Mammary epithelial cell (primary cell): ENCODE measurements at regions of chr14 and their contacts with region 1.

Region 1: GRCh38 chr14:95515596-95516552 is 576 bp downstream of the SYNE3 start:
- DNase-seq: peak; percentile 62
- H3K4me3 ChIP-seq: peak overlapping the region; percentile 53 to 58 (median 56)
- H3K27ac ChIP-seq: peak overlapping the region; percentile 28
- H3K4me1 ChIP-seq: peaks cover 45% of the 10 kb centered on the region
- H3K27me3 ChIP-seq: no peaks in the 10 kb centered on the region
- CTCF ChIP-seq: peak in 1 of 2 donors; percentile 30

Region 2: DNA sequence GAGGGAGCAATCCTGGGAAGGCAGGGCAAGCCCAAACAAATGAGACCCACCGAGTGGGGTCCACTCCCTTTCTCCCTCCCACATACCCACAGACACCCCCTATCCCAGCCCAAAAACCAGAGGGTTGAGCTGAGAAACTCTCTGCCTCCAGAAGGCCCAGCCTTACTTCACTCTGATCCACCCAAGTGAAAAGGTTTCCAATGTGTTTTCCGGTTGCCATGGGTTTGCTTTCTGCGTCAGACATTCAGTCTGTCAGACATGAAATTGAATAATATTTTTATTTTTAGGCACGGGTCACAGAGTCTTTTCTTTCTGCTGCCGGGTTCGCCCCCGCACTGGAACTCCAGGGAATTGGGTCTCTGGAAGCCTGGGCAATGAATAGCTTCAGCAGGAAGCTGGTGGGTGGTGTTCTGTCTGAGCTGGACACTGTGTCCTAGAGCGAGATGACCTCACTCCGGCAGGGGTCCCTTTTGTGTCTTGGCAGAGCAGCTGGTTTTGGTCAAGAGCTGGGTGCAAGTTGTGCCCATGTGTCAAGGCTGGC is 126.3 kb before region 1 on chr14:
- CTCF ChIA-PET with region 1: no interaction called
- dilution Hi-C with region 1: no loop called
- in situ Hi-C with region 1: no loop called
- intact Hi-C with region 1: no loop called
- DNase-seq: peak; percentile 5
- H3K4me3 ChIP-seq: no peak overlapping the region
- H3K27ac ChIP-seq: no peak overlapping the region
- H3K4me1 ChIP-seq: no peaks in the 10 kb centered on the region
- H3K27me3 ChIP-seq: no peaks in the 10 kb centered on the region
- CTCF ChIP-seq: no peak

Region 3: DNA sequence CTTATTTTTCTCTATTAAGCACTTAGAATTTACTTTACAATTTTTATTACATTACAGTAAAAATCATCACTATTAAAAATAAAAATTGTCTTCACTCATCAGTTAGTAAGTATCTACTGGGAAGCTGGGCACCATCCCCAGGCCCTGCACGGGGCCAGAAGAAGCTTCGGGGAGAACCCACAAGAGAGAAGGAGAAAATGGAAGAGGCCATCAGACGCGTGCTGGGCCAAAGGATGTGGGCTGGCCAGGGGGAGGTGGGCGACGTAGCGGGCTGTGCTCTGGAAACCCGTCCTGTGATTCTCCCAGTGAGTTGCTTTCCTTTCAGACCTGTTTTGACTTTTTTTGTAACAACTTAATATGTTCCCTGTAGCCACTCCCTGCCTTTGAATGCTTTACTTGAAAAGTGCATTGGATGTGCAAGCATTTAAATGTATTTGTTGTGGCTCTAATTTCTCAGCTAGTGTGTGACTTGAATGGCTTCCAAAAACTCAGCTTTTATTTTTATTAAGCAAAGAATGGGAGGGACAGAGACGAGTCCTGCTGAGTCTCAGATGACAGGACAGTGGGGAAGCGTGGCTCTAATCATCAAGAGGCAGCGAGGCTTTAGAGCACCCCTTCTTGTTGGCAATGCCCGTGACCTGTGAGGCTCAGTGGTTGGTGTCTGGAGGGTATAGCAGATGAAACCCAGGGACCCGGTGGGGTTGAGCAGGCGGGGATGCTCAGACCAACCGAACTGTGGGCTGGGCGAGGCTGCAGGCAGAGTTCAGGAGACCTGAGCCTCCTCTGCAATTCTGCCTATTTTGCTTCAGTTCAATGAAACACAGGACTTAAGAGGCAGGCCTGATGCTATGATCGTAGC is 38.2 kb before region 1 on chr14:
- CTCF ChIA-PET with region 1: no interaction called
- dilution Hi-C with region 1: no loop called
- in situ Hi-C with region 1: no loop called
- intact Hi-C with region 1: loop called (anchors 5 kb)
- DNase-seq: no peak
- H3K4me3 ChIP-seq: no peak overlapping the region
- H3K27ac ChIP-seq: no peak overlapping the region
- H3K4me1 ChIP-seq: peaks cover 5% of the 10 kb centered on the region
- H3K27me3 ChIP-seq: no peaks in the 10 kb centered on the region
- CTCF ChIP-seq: no peak

Region 4: GRCh38 chr14:95555053-95555452 is 39.2 kb after region 1 on chr14:
- CTCF ChIA-PET with region 1: no interaction called
- dilution Hi-C with region 1: no loop called
- in situ Hi-C with region 1: no loop called
- intact Hi-C with region 1: no loop called
- DNase-seq: no peak
- H3K4me3 ChIP-seq: no peak overlapping the region
- H3K27ac ChIP-seq: no peak overlapping the region
- H3K4me1 ChIP-seq: no peaks in the 10 kb centered on the region
- H3K27me3 ChIP-seq: no peaks in the 10 kb centered on the region
- CTCF ChIP-seq: no peak

Region 5: GRCh38 chr14:96268431-96269358 is 752.8 kb after region 1 on chr14:
- CTCF ChIA-PET with region 1: no interaction called
- dilution Hi-C with region 1: no loop called
- in situ Hi-C with region 1: no loop called
- intact Hi-C with region 1: no loop called
- DNase-seq: peak; percentile 99
- H3K4me3 ChIP-seq: no peak overlapping the region
- H3K27ac ChIP-seq: peak overlapping the region; percentile 78
- H3K4me1 ChIP-seq: peaks cover 46% of the 10 kb centered on the region
- H3K27me3 ChIP-seq: no peaks in the 10 kb centered on the region
- CTCF ChIP-seq: no peak